ENCODE measurements at regions of chr16 and their contacts with region 1.

Region 1: DNA sequence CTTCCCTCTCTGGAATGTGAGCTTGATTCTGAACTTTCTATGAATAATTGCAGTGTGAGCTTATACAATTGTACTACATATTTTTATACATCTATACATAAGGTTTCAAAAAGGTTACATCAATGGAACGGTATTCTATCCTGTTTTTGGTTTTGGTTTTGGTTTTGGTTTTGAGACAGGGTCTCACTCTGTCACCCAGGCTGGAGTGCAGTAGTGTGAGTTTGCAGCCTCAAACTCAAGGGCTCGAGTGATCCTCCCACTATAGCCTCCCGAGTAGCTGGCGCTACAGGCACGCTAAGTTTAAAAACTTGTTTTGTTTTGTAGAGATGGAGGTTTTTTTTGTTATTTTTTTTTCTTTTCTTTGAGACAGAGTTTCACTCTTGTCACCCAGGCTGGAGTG is 1.1 kb downstream of the CTRB1 start:
- DNase-seq: no peak
- H3K4me3 ChIP-seq: no peak overlapping the region
- H3K27ac ChIP-seq: no peak overlapping the region
- H3K4me1 ChIP-seq: no peaks in the 10 kb centered on the region
- H3K27me3 ChIP-seq: no peaks in the 10 kb centered on the region
- CTCF ChIP-seq: no peak
- POLR2A ChIP-seq: no peak

Region 2: GRCh38 chr16:75160386-75160785 is 59.5 kb before region 1 on chr16:
- CTCF ChIA-PET with region 1: no interaction called
- POLR2A ChIA-PET with region 1: no interaction called
- dilution Hi-C with region 1: no loop called
- intact Hi-C with region 1: no loop called
- DNase-seq: no peak
- H3K4me3 ChIP-seq: no peak overlapping the region
- H3K27ac ChIP-seq: no peak overlapping the region
- H3K4me1 ChIP-seq: no peaks in the 10 kb centered on the region
- H3K27me3 ChIP-seq: no peaks in the 10 kb centered on the region
- CTCF ChIP-seq: no peak
- POLR2A ChIP-seq: no peak

Region 3: GRCh38 chr16:75206749-75207451 is 12.9 kb before region 1 on chr16 and contains the start of gene CTRB2:
- CTCF ChIA-PET with region 1: interaction called, 4 read pairs
- POLR2A ChIA-PET with region 1: interaction called, 4 read pairs
- dilution Hi-C with region 1: no loop called
- intact Hi-C with region 1: loop called (anchors 2 kb)
- DNase-seq: no peak
- H3K4me3 ChIP-seq: no peak within 1 kb of the TSS
- H3K27ac ChIP-seq: no peak within 1 kb of the TSS
- H3K4me1 ChIP-seq: no peaks in the 10 kb centered on the region
- H3K27me3 ChIP-seq: no peaks in the 10 kb centered on the region
- CTCF ChIP-seq: no peak
- POLR2A ChIP-seq: no peak
- total RNA-seq, gene CTRB2: not detected in 2 replicates

Measured in endothelial cell of umbilical vein (primary cell).